ENCODE measurements at regions of chr19 and their contacts with region 1.

Region 1: GRCh38 chr19:51473009-51473707 is 5.2 kb upstream of the CEACAM18 start:
- DNase-seq: peak; percentile 51
- H3K4me3 ChIP-seq: no peak overlapping the region
- H3K27ac ChIP-seq: no peak overlapping the region
- H3K4me1 ChIP-seq: no peaks in the 10 kb centered on the region
- H3K27me3 ChIP-seq: peaks cover 73% of the 10 kb centered on the region
- CTCF ChIP-seq: peak; percentile 89

Region 2: DNA sequence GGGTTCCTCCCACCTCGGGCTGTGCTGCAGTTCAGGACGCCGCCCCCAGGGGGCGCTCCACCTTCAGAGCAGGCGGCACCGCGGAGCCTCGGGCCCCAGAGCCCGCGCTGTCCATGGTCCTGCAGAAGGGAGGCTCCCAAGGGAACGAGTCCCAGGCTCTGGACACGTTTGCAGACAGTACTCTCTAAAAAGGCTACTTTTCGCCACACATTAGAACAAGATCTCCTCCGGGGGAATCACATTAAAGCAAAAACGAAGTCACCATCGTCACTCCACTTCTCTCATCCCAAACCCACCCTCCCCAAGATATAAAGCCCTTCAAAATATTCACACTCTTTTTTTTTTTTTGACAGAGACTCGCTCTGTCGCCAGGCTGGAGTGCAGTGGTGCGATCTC is 51.1 kb before region 1 on chr19:
- intact Hi-C with region 1: no loop called
- DNase-seq: peak; percentile 82
- H3K4me3 ChIP-seq: no peak overlapping the region
- H3K27ac ChIP-seq: no peak overlapping the region
- H3K4me1 ChIP-seq: no peaks in the 10 kb centered on the region
- H3K27me3 ChIP-seq: peaks cover 90% of the 10 kb centered on the region
- CTCF ChIP-seq: peak; percentile 87

Region 3: DNA sequence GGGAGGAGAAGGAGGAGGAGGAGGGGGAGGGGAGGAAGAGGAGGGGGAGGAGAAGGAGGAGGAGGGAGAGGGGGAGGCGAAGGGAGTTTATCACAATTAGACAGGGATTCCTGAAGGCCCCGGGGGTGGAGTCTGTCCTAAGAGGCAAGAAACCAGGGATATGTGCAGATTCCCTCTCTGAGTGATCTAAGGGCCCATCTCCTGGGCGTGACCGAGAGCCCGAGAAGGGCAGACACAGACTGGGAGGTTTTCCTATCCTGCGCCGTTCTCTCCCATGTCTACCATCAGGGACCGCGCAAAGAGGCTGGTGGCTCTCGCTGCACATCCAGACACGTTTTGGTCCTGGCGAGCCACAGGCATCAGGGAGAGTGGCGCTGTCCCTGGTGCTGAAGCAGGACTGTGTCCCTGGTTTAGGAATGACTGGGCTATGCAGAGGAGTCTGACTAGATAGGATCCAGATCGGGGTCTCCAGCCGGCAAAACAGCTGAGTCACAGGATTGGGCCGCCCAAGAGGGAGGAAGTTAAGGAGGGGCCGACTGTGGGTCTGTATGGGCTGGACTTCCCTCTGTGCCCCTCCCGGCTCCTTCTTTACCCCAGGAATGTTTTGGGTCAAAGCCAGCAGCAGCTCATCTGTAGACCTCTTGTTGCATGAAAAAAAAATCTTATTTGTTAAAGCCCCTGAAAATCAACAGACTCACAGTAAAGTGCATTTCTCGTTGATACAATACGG is 80.0 kb after region 1 on chr19:
- intact Hi-C with region 1: no loop called
- DNase-seq: peak; percentile 72
- H3K4me3 ChIP-seq: no peak overlapping the region
- H3K27ac ChIP-seq: no peak overlapping the region
- H3K4me1 ChIP-seq: no peaks in the 10 kb centered on the region
- H3K27me3 ChIP-seq: peaks cover 78% of the 10 kb centered on the region
- CTCF ChIP-seq: no peak

Region 4: DNA sequence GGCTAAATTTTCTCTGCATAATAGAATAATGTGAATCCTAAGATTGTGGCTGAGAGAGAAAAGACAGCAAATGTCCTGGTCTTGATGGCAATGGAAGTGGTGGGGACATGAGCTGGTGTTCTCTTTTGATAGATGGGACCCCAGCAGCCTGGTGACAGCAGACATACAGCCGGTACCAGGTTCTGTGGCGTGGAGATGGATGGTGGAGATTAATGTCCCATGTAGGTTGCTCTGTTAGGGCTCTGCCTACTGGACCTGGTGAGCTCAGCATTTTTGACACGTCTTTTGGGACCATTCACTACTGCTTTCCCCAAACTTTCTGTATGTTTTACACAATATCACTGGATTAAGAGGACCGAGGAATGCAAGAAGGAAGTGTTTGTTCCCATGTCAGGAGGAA is 181.6 kb after region 1 on chr19:
- intact Hi-C with region 1: loop called (anchors 5 kb)
- DNase-seq: no peak
- H3K4me3 ChIP-seq: no peak overlapping the region
- H3K27ac ChIP-seq: no peak overlapping the region
- H3K4me1 ChIP-seq: peaks cover 8% of the 10 kb centered on the region
- H3K27me3 ChIP-seq: peaks cover 39% of the 10 kb centered on the region
- CTCF ChIP-seq: no peak

Region 5: GRCh38 chr19:51777570-51778462 is 304.7 kb after region 1 on chr19:
- intact Hi-C with region 1: loop called (anchors 10 kb)
- DNase-seq: peak; percentile 67
- H3K4me3 ChIP-seq: no peak overlapping the region
- H3K27ac ChIP-seq: no peak overlapping the region
- H3K4me1 ChIP-seq: peaks cover 2% of the 10 kb centered on the region
- H3K27me3 ChIP-seq: peaks cover 32% of the 10 kb centered on the region
- CTCF ChIP-seq: peak; percentile 84

Measured in left ventricle myocardium inferior (tissue), 1 donor.